ENCODE measurements at regions of chr1 and their contacts with region 1.

Region 1: GRCh38 chr1:108828022-108828961 is 28.6 kb downstream of the AKNAD1 start:
- DNase-seq: peak; percentile 91
- ATAC-seq: peak; percentile 91

Region 2: GRCh38 chr1:108609483-108610049 is 218.7 kb before region 1 on chr1:
- intact Hi-C with region 1: no loop called
- DNase-seq: no peak
- ATAC-seq: peak; percentile 93

Region 3: DNA sequence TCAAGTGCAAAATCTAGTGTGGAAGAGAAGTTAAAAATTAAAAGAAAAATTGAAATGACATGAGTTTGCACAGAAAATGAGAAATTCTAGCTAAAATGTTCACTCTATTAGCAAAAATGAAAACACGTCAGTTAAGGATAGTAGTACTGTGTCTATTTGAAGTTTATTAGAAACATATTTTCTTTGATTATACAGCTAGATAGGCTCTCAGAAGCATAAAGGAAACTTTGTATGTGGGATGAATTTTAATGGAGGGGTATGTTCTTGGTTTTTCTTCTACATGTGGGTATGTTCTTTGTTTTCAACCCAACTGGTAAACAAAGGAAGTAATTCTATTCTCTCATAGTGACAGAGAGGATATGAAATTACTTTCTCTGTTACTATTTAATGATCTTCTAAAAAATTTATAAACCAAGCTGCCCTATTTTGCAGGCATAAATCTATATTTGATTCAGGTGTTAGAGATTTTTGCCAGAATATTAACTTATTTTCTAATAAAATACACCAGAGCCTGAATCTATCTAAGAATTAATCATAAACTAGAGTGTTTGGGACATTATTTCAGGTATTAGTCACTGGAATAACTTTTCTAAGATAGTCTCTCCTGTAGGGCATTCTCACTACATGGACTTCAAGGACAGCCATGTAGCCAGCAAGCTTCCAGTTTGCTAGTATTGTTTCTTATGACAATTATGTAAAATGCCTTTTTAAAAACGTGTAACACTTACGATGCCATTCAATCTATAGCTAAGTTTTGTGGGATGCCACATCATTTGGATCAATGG is 64.3 kb after region 1 on chr1:
- intact Hi-C with region 1: loop called (anchors 5 kb)
- DNase-seq: no peak
- ATAC-seq: no peak